CD14-positive monocyte (primary cell): ENCODE measurements at regions of chr1 and their contacts with region 1.

Region 1: DNA sequence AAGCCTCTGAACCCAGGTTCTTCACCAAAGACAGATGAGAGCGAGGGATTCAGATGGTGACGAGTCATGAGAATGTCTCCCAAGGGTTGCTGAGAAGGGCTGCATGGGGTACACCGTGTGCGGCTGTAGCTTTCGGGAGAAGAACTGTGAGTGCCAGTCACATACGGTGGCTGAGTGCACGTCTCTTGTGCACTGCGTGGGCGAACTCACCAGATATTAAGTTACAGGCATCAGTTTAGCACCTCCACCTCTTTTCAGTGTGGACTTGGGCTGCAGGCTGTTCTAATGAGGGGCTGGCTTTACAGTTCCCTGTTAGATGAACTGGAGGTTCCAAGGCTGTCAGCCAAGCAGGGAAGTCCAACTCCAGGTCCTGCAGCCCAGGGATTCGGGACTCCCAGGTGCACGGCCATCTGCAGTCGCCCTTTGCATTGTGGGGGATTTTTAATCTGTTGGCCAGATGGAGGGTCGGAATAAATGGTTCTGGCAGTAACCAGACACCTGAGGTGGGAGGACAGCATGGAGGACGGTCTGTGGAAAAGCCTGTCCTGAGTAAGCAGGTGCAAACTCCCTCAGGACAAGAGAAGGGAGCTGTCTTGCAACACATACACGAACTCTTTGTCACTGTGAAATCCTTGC is 26.5 kb upstream of the AVPR1B start:
- DNase-seq: no peak
- H3K4me3 ChIP-seq: no peak overlapping the region
- H3K4me3 Mint-ChIP-seq: no peak overlapping the region
- H3K27ac ChIP-seq: no peak overlapping the region
- H3K27ac Mint-ChIP-seq: peak overlapping the region in 1 of 7 donors; percentile 7
- H3K4me1 ChIP-seq: no peaks in the 10 kb centered on the region
- H3K4me1 Mint-ChIP-seq: peaks cover 2% of the 10 kb centered on the region
- H3K27me3 ChIP-seq: no peaks in the 10 kb centered on the region
- H3K27me3 Mint-ChIP-seq: peaks cover 3 to 10% (median 10%) of the 10 kb centered on the region in 3 donors
- CTCF ChIP-seq: no peak

Region 2: DNA sequence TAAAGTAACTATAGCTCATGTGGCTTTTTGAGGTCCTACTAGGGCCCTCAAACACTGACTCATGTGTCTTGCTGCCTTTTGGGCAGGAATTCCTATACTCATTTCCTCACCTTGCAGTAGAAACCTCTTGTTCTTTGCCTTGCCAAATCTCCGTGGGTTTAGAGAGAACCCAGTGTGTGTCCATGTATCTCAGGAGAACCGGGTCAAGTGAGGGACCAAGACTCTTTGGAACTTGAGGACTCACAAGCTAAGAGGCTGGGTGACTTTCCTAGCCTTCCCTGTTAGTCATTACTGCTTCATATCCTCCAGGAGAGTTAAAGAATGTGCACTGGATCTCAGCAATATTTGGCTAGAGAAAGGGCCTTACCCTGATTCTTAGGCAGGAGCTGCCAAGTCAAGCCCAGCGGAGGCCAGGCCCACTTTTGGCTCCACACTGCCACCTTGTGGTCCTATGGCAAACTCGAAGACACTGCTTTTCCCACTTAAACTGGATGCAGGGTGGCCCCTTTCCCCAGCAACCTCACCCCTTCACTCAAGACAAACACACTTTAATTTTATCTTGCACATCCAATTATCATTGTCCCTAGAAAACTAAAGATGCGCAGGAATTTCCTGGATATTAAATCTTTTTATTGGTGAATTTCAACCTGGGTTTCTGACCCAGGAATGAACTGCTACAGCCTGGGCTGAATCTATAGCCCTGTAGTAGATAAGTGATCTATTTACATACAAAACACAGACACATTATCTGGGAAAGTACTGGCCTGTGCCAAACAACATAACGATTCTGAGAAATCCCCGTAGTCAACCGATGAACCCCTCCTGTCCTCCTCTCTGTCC is 37.1 kb before region 1 on chr1:
- intact Hi-C with region 1: no loop called
- DNase-seq: peak; percentile 67 to 81 (median 76)
- H3K4me3 ChIP-seq: no peak overlapping the region
- H3K4me3 Mint-ChIP-seq: no peak overlapping the region
- H3K27ac ChIP-seq: no peak overlapping the region
- H3K27ac Mint-ChIP-seq: no peak overlapping the region
- H3K4me1 ChIP-seq: peaks cover 22% of the 10 kb centered on the region in 2 donors
- H3K4me1 Mint-ChIP-seq: peaks cover 29% of the 10 kb centered on the region
- H3K27me3 ChIP-seq: no peaks in the 10 kb centered on the region
- H3K27me3 Mint-ChIP-seq: peaks cover 0 to 5% (median 4%) of the 10 kb centered on the region in 3 donors
- CTCF ChIP-seq: peak; percentile 88

Region 3: GRCh38 chr1:206430031-206430983 is 286.7 kb after region 1 on chr1:
- intact Hi-C with region 1: loop called in 1 of 2 experiments (anchors 10 kb)
- DNase-seq: no peak
- H3K4me3 ChIP-seq: no peak overlapping the region
- H3K4me3 Mint-ChIP-seq: no peak overlapping the region
- H3K27ac ChIP-seq: no peak overlapping the region
- H3K27ac Mint-ChIP-seq: peak overlapping the region in 2 of 7 donors; percentile 0 to 21
- H3K4me1 ChIP-seq: no peaks in the 10 kb centered on the region
- H3K4me1 Mint-ChIP-seq: no peaks in the 10 kb centered on the region
- H3K27me3 ChIP-seq: no peaks in the 10 kb centered on the region
- H3K27me3 Mint-ChIP-seq: no peaks in the 10 kb centered on the region
- CTCF ChIP-seq: no peak